ENCODE measurements at regions of chr20 and their contacts with region 1.

Region 1: DNA sequence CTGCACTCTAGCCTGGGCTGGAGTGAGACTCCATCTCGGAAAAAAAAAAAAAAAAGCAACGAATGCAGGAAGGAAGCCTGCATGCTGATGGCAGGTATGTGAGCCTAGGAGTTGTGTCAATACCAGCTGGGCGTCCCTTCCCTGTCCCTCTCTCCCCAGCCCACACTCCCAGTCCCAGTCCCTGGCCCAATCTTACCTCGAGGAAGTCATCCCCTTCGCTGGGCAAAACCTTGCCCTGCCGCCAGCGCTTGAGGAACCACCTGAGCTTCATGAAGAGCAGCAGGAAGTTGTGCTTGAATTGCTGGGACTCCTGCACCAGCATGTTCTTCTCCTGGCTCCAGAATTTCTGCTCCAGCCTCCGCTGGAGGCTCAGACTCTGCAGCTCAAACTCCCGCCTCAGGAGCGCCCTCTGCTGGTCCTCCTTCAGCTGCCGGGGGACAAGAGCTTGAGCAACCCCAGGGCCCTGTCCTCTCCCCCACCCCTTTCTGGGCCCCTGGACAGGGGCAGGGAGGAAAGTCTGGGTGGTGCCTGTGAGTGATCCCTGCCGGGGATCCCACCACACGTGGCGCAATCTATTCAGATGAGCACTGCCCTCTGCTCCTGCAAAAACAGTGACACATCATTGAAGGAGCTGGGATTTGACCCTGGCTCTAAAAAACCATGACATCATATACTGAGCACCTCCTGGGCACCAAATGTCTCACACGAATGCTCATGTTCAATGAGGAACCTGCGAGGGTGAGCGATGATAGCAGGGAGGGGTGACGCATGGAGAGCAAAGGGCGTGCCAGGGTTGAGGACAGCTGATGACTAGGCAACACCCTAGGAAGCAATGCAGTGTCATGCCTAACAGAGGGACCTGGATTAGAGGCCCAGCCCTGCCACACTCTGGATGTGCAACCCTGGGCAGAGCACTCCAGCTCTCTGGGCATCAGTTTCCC is 35.0 kb upstream of the DSN1 start:
- DNase-seq: peak; percentile 83
- H3K4me3 Mint-ChIP-seq: no peak overlapping the region
- H3K27ac Mint-ChIP-seq: peak overlapping the region; percentile 54
- H3K4me1 Mint-ChIP-seq: peaks cover 3% of the 10 kb centered on the region
- H3K27me3 Mint-ChIP-seq: no peaks in the 10 kb centered on the region

Region 2: GRCh38 chr20:36317675-36318074 is 490.9 kb before region 1 on chr20:
- CTCF ChIA-PET with region 1: no interaction called
- POLR2A ChIA-PET with region 1: no interaction called
- intact Hi-C with region 1: no loop called
- DNase-seq: no peak
- H3K4me3 Mint-ChIP-seq: no peak overlapping the region
- H3K27ac Mint-ChIP-seq: no peak overlapping the region
- H3K4me1 Mint-ChIP-seq: no peaks in the 10 kb centered on the region
- H3K27me3 Mint-ChIP-seq: peaks cover 8% of the 10 kb centered on the region

Region 3: DNA sequence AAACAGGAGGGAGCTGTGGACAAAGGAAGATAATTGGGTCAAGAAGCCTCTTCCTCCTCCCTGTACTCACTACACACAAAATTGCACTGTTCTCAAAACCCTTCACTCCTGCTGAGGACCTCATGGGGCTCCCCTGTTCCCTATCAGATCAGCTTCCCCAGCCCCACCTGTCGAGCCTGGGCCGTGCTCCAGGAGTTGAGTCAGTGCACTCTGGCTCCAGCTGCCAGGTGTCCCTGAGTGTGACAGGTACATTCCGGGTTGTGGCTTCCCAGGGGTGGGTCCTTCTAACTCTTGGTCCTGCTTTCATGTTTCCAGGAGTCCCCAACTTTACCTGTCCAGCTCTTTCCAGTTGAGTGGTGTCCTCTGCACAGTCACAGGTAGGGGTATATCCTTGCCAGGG is 194.6 kb before region 1 on chr20:
- CTCF ChIA-PET with region 1: interaction called, 12 read pairs
- POLR2A ChIA-PET with region 1: no interaction called
- intact Hi-C with region 1: no loop called
- DNase-seq: no peak
- H3K4me3 Mint-ChIP-seq: no peak overlapping the region
- H3K27ac Mint-ChIP-seq: peak overlapping the region; percentile 28
- H3K4me1 Mint-ChIP-seq: peaks cover 12% of the 10 kb centered on the region
- H3K27me3 Mint-ChIP-seq: no peaks in the 10 kb centered on the region

Region 4: GRCh38 chr20:36819659-36820058 is 11.1 kb after region 1 on chr20:
- CTCF ChIA-PET with region 1: interaction called, 11 read pairs
- POLR2A ChIA-PET with region 1: no interaction called
- intact Hi-C with region 1: no loop called
- DNase-seq: no peak
- H3K4me3 Mint-ChIP-seq: no peak overlapping the region
- H3K27ac Mint-ChIP-seq: no peak overlapping the region
- H3K4me1 Mint-ChIP-seq: no peaks in the 10 kb centered on the region
- H3K27me3 Mint-ChIP-seq: no peaks in the 10 kb centered on the region

Region 5: DNA sequence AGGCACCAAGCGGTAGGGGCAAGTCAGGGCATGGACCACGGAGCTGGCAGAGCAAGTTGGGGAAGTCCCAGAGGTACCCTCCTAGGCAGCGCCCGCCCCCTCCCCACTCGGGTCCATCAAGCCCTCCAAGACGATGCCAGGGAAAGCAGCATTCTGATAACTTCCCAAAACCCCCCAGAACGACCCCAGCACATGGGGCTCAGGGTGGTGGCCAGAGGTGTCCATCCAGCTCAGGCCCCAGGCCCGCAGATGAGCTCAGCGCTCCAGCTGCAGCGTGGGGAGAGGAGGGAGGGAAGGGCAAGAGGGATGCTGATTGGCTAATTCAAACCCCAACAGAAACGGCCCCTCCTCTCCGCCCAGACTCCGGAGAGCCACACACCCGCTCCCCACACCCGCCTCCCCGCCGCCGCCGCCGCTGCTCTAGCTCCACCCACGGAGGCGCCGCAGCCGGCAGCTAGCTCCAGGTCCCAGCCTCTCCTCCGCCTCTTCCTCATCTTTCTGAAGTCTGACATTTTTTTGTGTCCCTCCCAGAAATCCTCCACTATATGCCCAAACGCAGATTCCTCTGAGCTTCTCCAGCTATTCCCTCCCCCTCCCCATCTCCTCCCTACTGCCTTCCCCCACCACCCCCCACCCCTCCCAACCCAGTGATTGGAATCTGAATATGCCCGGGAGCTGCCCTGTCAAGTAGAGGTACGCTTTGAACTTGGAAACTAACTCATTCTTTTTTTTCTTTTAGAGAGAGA is 27.0 kb after region 1 on chr20:
- CTCF ChIA-PET with region 1: interaction called, 17 read pairs
- POLR2A ChIA-PET with region 1: no interaction called
- intact Hi-C with region 1: no loop called
- DNase-seq: peak; percentile 93
- H3K4me3 Mint-ChIP-seq: peak overlapping the region; percentile 80
- H3K27ac Mint-ChIP-seq: peak overlapping the region; percentile 76
- H3K4me1 Mint-ChIP-seq: peaks cover 14% of the 10 kb centered on the region
- H3K27me3 Mint-ChIP-seq: no peaks in the 10 kb centered on the region

Region 6: DNA sequence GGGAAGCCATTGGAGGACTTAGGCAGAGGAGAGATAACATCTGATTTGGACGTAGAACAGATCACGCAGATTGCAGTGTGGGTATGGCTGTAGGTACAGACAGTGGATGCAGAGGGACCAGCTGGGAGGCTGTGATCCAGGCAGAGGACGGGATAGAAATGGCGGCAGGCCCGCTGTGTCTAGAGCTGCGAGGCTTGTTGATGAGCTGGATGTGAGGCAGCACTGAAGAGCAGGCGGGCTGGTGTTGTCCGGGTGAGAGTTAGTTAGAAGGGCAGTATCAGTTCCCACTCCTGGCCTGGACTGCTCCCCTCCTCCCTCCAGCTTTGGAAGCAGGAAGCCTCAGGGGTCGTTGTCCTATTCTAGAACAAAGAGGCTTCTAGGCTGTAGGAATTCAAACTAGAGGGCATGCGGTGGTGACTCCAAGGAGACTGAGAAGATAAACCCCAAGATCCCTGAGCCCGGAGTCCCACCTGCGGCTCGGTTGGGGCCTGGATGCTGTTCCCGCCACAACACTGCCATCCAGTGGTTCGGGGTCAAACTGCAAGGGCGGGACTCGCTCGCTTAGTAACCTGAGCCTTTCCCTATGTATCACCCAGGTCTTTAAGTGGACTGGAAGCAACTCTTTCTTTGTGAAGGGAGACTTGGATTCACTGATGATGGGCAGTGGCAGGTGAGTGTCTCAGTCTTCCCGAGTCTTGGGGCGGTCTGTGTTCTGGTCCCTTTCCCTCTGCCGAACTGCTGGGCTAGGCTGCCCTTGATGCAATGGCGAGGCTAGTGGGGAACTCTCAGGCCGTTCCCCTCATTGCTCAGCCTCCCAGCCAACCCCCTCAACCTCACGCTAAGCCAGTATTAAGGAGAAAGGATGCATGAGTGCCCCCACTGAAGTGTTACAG is 78.5 kb after region 1 on chr20:
- CTCF ChIA-PET with region 1: interaction called, 18 read pairs
- POLR2A ChIA-PET with region 1: no interaction called
- intact Hi-C with region 1: no loop called
- DNase-seq: peak; percentile 90
- H3K4me3 Mint-ChIP-seq: no peak overlapping the region
- H3K27ac Mint-ChIP-seq: no peak overlapping the region
- H3K4me1 Mint-ChIP-seq: peaks cover 25% of the 10 kb centered on the region
- H3K27me3 Mint-ChIP-seq: no peaks in the 10 kb centered on the region

Region 7: GRCh38 chr20:36988494-36988966 is 179.9 kb after region 1 on chr20:
- CTCF ChIA-PET with region 1: no interaction called
- POLR2A ChIA-PET with region 1: no interaction called
- intact Hi-C with region 1: no loop called
- DNase-seq: peak; percentile 23
- H3K4me3 Mint-ChIP-seq: no peak overlapping the region
- H3K27ac Mint-ChIP-seq: peak overlapping the region; percentile 26
- H3K4me1 Mint-ChIP-seq: peaks cover 20% of the 10 kb centered on the region
- H3K27me3 Mint-ChIP-seq: no peaks in the 10 kb centered on the region

Region 8: GRCh38 chr20:37345339-37346230 is 537.0 kb after region 1 on chr20 and contains the start of gene SRC:
- CTCF ChIA-PET with region 1: no interaction called
- POLR2A ChIA-PET with region 1: no interaction called
- intact Hi-C with region 1: no loop called
- DNase-seq: peak; percentile 61
- H3K4me3 Mint-ChIP-seq: peak within 1 kb of the TSS; percentile 59
- H3K27ac Mint-ChIP-seq: no peak within 1 kb of the TSS
- H3K4me1 Mint-ChIP-seq: peaks cover 13% of the 10 kb centered on the region
- H3K27me3 Mint-ChIP-seq: no peaks in the 10 kb centered on the region
- total RNA-seq, gene SRC: 5.3 to 6.1 TPM

Measured in activated CD4-positive, alpha-beta memory T cell treated with anti-CD3 and anti-CD28 coated beads for 36 hours (primary cell).